ENCODE measurements at regions of chr11 and their contacts with region 1.

Region 1: DNA sequence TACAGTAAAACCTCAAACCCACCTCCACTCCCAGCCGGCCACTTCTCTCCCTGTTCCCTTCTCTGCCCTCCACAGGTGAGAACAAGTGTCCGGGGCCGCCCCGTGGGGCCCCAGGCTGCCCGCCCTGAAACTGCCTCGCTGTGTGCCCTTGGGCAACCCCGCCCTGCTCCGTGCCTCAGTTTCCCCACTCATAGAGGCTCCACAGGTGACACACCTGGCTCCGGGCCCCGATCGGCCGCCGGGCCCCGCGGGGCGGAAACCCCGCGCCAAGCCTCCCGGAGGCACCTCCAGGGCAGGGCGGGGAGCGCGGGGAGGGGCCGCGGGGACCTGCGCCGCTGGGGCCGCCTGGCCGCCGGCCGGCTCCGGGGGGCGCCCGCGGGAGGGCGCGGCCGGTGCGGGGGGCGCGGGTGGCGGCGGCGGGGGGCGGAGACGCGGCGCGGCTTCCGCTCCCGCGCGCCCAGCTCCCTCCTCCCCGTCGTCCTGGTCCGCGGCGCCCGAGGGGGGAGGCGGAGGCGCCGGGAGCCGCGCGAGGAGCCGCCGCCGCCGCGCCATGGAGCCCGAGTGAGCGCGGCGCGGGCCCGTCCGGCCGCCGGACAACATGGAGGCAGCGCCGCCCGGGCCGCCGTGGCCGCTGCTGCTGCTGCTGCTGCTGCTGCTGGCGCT is at the start of gene LRP5:
- DNase-seq: peak in 2 of 3 donors; percentile 75 to 76
- ATAC-seq: peak; percentile 8 to 9
- H3K4me3 ChIP-seq: peak within 1 kb of the TSS; percentile 97
- H3K27ac ChIP-seq: peak within 1 kb of the TSS; percentile 80
- H3K4me1 ChIP-seq: peaks cover 10% of the 10 kb centered on the region
- H3K27me3 ChIP-seq: no peaks in the 10 kb centered on the region
- total RNA-seq, gene LRP5: 61.6 to 88.8 (median 75.4) TPM

Region 2: DNA sequence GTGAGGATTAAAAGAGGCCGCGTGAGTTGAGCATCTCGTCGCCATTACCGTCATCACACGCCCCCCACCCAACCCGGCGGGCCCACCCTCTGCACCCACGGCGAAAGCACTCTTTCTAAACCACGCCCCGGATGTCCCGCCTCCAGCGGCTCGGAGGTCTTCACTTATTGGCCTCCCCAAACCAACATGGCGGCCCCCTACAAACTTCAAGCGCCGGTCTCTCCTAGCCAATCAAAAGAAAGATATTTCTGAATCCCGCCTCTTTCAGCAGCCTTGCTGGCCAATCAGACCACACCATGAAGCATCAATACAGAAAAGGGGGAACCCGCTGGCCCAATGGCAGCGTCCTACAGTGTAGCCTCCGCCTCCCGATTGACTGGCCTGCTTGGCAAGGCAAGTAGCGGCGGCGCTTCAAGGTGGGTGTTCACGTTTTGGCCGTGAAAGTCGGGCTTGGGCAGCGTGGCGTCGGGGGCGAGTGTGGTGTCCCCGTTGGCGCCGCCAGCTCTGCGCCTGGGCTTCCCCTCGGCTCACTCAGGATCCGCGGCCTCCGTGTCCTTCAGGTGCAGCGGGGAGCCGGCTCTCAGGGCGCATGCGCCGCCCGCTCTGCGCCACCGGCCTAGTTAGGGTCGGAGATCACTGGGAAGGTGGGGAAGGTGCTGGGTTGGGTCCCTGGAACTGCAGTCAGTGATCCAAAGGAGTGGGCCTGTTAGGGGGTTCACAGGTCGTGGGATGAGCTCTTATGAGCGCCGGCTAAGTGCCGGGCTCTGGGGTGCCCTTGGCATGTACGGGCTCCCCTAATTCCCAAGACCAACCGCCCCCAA is 281.7 kb before region 1 on chr11 and contains the start of gene NDUFS8:
- intact Hi-C with region 1: loop called in 1 of 4 experiments (anchors 10 kb)
- DNase-seq: peak; percentile 98 to 99 (median 98)
- ATAC-seq: peak; percentile 94
- H3K4me3 ChIP-seq: peak within 1 kb of the TSS; percentile 57
- H3K27ac ChIP-seq: peak within 1 kb of the TSS; percentile 98
- H3K4me1 ChIP-seq: peaks cover 2% of the 10 kb centered on the region
- H3K27me3 ChIP-seq: no peaks in the 10 kb centered on the region
- total RNA-seq, gene NDUFS8: 334 to 454 (median 391) TPM

Region 3: DNA sequence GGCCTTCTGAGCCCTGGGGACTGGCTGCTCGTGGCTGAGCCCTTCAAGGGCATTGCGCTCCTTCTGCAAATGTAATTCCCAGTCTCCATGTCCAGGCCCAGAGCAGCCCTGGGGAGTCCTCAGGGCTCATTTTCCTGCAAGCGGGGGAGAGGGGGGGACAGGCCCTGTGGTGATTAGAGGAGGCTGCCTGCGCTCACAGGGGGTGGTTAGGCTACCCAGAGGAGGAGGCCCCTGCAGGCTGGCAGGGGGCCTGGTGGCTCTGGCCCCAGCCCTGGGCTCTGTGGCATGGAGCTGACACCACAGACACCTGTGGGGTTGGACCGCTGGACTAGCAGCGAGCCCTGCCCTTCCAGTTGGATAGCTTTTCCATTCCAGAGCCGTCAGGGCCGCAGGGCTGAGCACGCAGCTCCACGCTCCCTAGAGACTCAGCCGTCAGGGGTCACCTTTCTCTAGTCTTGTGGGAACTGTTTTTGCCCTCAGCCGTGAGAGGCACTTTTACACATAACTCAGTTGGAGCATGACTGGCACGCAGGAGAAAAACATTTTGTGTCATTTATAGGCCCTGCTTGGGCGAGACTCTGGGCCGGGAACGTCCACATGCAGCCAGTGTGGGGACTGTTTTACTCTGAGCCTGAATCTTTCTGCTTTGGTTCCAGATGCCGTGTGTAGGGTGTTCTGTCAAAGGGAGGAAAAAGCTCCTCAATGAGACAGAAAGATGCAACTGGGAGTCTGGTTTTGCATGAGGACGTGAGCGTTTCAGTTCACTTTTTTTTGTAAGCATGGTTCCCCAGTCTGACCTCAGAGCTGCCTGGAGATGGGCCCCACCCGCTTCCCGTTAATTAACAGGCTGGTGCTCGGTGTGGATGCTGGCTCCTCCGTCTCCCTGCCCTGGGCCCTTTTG is 58.2 kb after region 1 on chr11:
- intact Hi-C with region 1: loop called in 2 of 4 experiments (anchors 5 to 10 kb)
- DNase-seq: peak; percentile 54 to 78 (median 73)
- ATAC-seq: peak; percentile 30 to 46
- H3K4me3 ChIP-seq: no peak overlapping the region
- H3K27ac ChIP-seq: peak overlapping the region; percentile 75
- H3K4me1 ChIP-seq: peaks cover 20% of the 10 kb centered on the region
- H3K27me3 ChIP-seq: no peaks in the 10 kb centered on the region

Region 4: DNA sequence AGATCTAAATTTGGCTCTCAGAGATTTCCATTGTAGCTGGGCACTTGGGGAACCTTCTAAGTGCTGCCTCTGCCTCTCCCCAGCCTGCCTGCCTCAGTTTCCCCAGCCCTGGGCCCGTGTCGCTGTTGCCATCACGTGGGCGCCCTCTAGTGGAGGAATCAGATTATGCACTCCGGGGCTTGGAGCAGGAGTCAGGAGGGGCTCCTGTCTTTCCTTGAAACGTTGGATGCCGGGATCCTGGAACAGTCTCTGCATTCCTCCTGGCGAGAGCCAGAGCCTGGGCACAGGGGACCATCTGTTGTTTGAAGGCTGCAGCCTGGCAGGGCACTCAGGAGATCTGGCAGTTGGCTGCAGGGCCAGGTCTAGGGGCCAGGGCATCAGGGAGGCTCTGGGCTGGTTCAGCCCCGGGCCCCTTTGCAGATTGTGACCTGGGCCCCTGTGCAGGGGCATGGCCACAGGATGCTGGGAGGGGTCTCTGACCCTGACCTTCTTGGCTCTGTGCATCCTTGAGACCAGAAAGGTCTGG is 71.8 kb after region 1 on chr11:
- intact Hi-C with region 1: loop called in 3 of 4 experiments (anchors 5 to 10 kb)
- DNase-seq: peak; percentile 70 to 89 (median 88)
- ATAC-seq: no peak
- H3K4me3 ChIP-seq: no peak overlapping the region
- H3K27ac ChIP-seq: no peak overlapping the region
- H3K4me1 ChIP-seq: peaks cover 17% of the 10 kb centered on the region
- H3K27me3 ChIP-seq: no peaks in the 10 kb centered on the region

Region 5: GRCh38 chr11:68532727-68533369 is 220.6 kb after region 1 on chr11:
- intact Hi-C with region 1: no loop called
- DNase-seq: no peak
- ATAC-seq: peak in 1 of 2 donors; percentile 28
- H3K4me3 ChIP-seq: no peak overlapping the region
- H3K27ac ChIP-seq: no peak overlapping the region
- H3K4me1 ChIP-seq: peaks cover 7% of the 10 kb centered on the region
- H3K27me3 ChIP-seq: no peaks in the 10 kb centered on the region